Spleen (tissue), 13 donors: ENCODE measurements at regions of chr7 and their contacts with region 1.

Region 1: GRCh38 chr7:22445140-22445743 is 54.7 kb downstream of the STEAP1B start:
- DNase-seq: peak; percentile 91
- H3K4me3 ChIP-seq: peak overlapping the region in 1 of 8 donors; percentile 25
- H3K27ac ChIP-seq: peak overlapping the region; percentile 66 to 89 (median 78)
- H3K4me1 ChIP-seq: peaks cover 18 to 48% (median 33%) of the 10 kb centered on the region in 6 donors
- H3K27me3 ChIP-seq: no peaks in the 10 kb centered on the region
- CTCF ChIP-seq: no peak
- POLR2A ChIP-seq: no peak

Region 2: GRCh38 chr7:22356701-22357353 is 88.4 kb before region 1 on chr7 and contains the start of gene RAPGEF5:
- intact Hi-C with region 1: loop called (anchors 10 kb)
- DNase-seq: peak; percentile 79
- H3K4me3 ChIP-seq: peak within 1 kb of the TSS; percentile 31 to 82 (median 50)
- H3K27ac ChIP-seq: peak within 1 kb of the TSS; percentile 41 to 80 (median 72)
- H3K4me1 ChIP-seq: peaks cover 0 to 20% (median 8%) of the 10 kb centered on the region in 6 donors
- H3K27me3 ChIP-seq: peaks cover 0 to 39% (median 3%) of the 10 kb centered on the region in 7 donors
- CTCF ChIP-seq: no peak
- POLR2A ChIP-seq: no peak
- total RNA-seq, gene RAPGEF5: 160 to 335 (median 235) TPM

Region 3: DNA sequence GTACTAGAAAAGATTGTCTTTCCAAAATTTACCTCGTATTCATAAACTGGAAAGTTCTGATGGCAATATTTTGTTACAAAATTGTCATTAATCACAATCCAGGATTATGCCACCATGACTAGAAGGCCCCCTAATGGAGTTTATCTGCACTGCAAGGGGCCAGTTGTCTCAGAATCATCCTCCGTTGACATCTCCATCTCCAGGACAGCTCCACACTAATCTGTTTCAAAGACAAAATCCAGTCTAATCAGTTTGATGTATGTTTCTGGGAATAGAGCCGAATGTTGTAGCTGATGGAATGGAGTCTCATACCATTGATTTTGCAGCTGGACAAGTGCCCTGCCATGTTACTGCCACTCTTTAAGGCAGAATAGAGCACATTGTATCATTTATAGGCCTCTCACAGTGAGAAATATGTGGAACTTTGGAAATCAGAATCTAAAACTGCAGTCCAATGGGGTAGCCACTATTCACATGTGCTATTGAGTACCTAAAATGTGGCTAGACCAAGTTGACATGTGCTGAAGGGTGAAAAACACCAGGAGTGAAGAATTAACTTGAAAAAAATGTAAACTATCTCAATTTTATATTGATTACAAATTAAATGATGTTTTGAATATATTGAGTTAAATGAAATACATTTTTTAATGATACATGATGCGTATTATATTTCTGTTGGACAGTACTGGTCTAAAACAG is 415.7 kb after region 1 on chr7:
- intact Hi-C with region 1: no loop called
- DNase-seq: no peak
- H3K4me3 ChIP-seq: no peak overlapping the region
- H3K27ac ChIP-seq: peak overlapping the region in 2 of 8 donors; percentile 19 to 34
- H3K4me1 ChIP-seq: peaks cover 0 to 9% (median 5%) of the 10 kb centered on the region in 6 donors
- H3K27me3 ChIP-seq: no peaks in the 10 kb centered on the region
- CTCF ChIP-seq: peak in 9 of 11 experiments; percentile 18 to 65 (median 52)
- POLR2A ChIP-seq: no peak